ENCODE measurements at regions of chr2 and their contacts with region 1.

Region 1: DNA sequence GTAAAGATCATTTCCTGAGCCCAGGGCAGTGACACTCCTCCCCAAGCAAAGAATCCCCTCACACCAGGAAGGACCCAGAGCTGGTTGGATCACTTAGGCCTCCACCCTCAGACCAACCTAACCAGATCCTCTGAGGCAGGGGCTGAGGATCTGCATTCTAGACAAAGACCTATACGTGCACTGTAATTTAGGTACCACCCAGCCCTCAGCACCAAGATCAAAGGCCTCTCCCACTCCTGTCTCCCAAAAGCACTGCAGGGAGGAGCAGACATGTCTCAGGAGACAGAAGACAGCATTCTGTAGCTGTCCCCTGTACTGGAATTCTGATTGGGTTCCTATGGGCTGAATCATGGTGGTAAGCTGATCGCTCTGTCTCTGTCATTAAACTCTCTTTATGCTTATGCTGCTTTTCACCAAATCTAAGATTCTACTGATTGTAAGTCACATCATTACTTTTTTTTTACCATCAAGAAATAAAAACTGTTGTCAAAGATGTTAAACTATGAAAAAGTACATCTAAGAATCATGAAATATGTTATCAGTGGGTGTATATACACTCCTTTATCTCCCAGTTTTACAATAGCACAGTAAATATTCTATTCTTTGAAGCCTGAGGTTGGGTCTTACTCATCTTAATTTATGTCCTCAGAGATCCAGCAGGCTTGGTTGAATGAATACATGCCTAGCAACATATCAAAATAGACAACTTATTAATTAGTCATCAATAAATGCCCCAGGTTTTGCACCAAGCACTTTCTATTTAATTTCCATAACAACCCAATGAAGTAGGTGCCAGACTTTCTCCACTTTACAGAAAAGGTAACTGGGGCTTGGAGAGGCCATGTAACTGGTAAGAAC is 28.3 kb downstream of the MCFD2 start:
- DNase-seq: peak in 1 of 42 donors; percentile 10

Region 2: DNA sequence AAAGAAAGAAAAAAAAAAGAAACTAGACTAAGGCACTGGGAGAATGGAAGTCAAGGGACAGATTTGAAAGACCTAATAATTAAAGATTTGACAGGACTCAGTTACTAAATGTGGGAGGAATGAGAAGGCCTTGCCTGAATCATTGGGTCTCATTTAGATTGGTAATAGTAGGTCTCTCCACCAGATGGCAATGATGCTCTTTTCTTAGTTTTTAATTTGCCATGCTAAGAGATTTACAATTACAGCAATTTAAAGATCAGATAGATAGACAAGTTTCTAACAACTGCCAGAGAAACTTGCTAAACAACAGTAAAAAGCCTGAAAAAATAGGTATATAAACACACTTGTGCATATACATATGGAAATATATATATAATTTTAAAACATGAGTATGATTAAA is 254.9 kb before region 1 on chr2:
- intact Hi-C with region 1: loop called (anchors 5 kb)
- DNase-seq: peak in 1 of 42 donors; percentile 28

Measured in head of caudate nucleus (tissue), 42 donors.